ENCODE measurements at regions of chr10 and their contacts with region 1.

Region 1: DNA sequence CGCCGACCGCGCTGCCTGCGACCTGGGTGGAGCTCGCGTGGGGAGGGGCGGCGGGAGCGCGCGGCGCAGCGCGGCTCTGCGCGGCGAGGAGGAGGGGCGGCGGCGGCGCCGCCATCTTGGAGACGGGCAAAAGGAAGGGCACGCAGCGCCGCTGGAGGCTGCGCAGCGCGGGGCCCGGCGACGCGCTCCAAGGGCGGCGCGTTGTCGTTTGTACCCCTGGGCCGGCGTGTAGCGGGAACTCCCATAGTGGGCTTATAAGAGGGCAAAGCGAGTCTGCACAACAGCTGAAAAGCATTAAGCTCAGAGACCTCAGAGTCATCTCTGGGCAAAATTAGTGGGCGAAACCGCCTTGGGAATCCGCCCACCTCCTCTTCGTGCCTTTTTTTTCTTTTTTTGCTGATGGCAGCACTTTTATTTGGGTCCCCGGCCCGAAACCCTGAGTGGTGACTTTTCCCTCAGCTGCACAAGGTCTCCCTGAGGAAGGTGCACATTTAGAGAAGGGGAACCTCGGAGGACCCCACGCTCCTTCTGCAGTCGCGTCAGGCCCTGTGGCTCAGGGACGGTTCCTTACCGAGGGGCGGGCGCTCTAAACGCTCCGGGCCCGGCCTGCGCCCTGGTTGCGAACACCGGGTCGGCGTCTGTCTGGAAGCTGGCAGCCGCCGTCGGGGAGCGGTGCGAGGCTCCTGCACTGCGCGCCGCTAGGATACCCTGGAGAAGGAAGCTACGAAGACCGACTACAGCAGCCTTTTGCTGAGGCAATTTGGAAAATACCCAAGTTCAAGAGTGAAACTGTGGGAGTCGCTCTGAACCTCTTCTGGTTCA is 428 bp upstream of the MCMBP start:
- DNase-seq: peak in 1 of 2 experiments; percentile 84
- H3K4me3 ChIP-seq: peak overlapping the region; percentile 65 to 92 (median 79)
- H3K27ac ChIP-seq: peak overlapping the region; percentile 83
- H3K4me1 ChIP-seq: no peaks in the 10 kb centered on the region; a peak in 3 of 7 replicates
- H3K27me3 ChIP-seq: no peaks in the 10 kb centered on the region
- CTCF ChIP-seq: no peak
- EP300 ChIP-seq: peak in 1 of 2 experiments; percentile 16; a peak in 1 of 3 replicates
- POLR2A ChIP-seq: no peak
- RAD21 ChIP-seq: no peak

Region 2: DNA sequence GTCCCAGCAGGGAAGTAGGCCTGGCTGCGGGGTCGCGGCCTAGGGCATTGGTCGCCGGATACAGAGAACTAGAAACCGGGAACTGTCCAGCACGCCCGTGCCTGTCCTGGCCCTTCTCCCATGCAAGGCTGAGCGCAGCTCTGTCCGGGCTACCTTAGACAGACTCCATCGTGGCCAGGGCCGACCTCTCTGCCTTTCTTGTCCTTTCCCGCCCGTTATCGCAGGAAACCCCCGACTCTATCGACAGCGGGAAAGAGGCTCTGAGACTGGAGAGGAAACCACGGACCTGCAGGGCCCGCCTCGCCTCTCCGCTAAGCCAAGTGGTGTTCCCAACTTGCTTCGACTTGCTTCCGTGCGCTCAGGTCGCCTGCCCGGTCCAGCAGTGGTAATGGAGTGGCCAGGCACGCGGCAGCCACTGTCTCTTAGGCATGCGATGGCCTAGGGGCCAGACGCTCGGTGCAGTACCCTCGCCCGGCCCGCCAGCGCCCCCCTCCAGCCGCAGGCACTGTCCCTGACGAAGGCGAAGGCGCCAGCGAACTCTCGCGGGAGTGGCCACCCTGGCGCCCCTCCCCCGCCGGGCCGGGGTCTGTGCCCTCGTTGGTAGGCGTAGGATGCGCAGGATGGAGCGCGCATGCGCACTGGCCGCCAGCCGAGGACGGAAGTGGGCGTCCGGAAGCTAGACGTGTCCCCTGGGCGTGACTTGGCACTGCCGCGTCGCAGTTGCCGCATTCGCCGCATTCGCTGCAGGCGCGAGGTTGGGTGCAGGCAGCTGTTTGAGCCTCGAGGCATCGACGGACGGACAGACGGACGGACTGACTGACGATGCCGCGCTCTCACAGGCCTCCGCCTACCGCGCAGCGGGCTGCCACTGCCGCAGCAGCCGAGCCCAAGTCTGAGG is 54.8 kb before region 1 on chr10:
- CTCF ChIA-PET with region 1: interaction called, 3 read pairs
- POLR2A ChIA-PET with region 1: interaction called, 10 read pairs
- DNase-seq: peak; percentile 95 to 96
- H3K4me3 ChIP-seq: peak overlapping the region; percentile 54 to 90 (median 74)
- H3K27ac ChIP-seq: peak overlapping the region; percentile 90
- H3K4me1 ChIP-seq: peaks cover 0 to 11% (median 4%) of the 10 kb centered on the region in 4 experiments; a peak in 5 of 7 replicates
- H3K27me3 ChIP-seq: no peaks in the 10 kb centered on the region
- CTCF ChIP-seq: peak; percentile 56 to 65 (median 58)
- EP300 ChIP-seq: no peak
- POLR2A ChIP-seq: peak; percentile 95 to 96
- RAD21 ChIP-seq: peak; percentile 44 to 53

Region 3: DNA sequence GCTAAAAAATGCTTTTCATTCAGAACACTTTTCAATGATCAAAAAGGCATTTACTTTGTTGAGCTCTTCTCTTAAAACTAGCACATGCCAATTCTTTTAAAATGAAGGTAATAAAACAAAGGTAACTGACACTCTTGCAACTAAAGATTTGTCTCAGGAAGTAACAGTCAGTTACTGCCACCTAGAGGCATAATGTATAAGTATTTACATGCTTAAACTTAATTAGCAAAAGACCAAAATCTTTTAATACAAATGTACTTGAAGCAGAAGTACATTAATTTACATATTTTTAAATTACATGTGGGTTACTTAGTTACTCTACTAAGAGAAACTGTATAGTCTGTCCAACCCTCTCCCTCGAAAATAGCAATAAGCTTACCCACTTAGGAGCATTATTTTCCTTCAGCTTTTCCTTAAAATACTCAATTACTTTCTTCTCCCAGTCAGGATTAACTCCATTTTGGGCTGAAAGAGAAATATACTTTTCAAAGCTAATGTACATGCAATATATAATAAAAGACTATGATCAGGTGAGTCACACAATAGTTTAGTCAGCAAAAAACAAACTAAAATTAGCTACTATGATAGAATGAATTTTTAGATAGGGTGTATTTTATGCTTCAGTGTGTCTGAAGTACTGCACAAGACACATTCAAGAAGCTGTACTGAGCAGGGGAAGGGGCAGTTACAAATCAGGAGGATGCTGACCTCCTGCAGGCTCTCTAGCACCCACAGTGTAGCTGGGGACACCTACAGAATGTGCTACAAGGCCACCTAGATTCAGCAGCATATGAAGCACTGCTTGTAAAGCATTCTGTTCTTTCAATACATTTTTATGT is 13.4 kb before region 1 on chr10:
- CTCF ChIA-PET with region 1: interaction called, 36 read pairs
- POLR2A ChIA-PET with region 1: interaction called, 9 read pairs
- DNase-seq: no peak
- H3K4me3 ChIP-seq: no peak overlapping the region
- H3K27ac ChIP-seq: no peak overlapping the region
- H3K4me1 ChIP-seq: peaks cover 0 to 6% (median 3%) of the 10 kb centered on the region in 4 experiments; a peak in 4 of 7 replicates
- H3K27me3 ChIP-seq: no peaks in the 10 kb centered on the region
- CTCF ChIP-seq: peak in 2 of 3 experiments; percentile 18 to 43; a peak in 2 of 4 replicates
- EP300 ChIP-seq: no peak
- POLR2A ChIP-seq: no peak
- RAD21 ChIP-seq: peak in 1 of 2 experiments; percentile 55; a peak in 3 of 4 replicates

Region 4: GRCh38 chr10:119892188-119893065 is 19.4 kb after region 1 on chr10 and contains the start of gene SEC23IP:
- CTCF ChIA-PET with region 1: interaction called, 4 read pairs
- POLR2A ChIA-PET with region 1: interaction called, 18 read pairs
- DNase-seq: peak; percentile 86 to 92
- H3K4me3 ChIP-seq: peak within 1 kb of the TSS; percentile 62 to 91 (median 84)
- H3K27ac ChIP-seq: peak within 1 kb of the TSS; percentile 90
- H3K4me1 ChIP-seq: peaks cover 0 to 4% (median 0%) of the 10 kb centered on the region in 4 experiments; a peak in 2 of 7 replicates
- H3K27me3 ChIP-seq: no peaks in the 10 kb centered on the region
- CTCF ChIP-seq: no peak
- EP300 ChIP-seq: peak in 1 of 2 experiments; percentile 82; a peak in 1 of 3 replicates
- POLR2A ChIP-seq: peak; percentile 72 to 91
- RAD21 ChIP-seq: no peak
- total RNA-seq, gene SEC23IP: 98.2 and 105 TPM in 2 replicates